Activated CD8-positive, alpha-beta T cell treated with anti-CD3 and anti-CD28 coated beads, Interleukin-2, amount 10 ng/mL, durations not matched to agents 7 days and 5 days (primary cell): ENCODE measurements at regions of chr10 and their contacts with region 1.

Region 1: DNA sequence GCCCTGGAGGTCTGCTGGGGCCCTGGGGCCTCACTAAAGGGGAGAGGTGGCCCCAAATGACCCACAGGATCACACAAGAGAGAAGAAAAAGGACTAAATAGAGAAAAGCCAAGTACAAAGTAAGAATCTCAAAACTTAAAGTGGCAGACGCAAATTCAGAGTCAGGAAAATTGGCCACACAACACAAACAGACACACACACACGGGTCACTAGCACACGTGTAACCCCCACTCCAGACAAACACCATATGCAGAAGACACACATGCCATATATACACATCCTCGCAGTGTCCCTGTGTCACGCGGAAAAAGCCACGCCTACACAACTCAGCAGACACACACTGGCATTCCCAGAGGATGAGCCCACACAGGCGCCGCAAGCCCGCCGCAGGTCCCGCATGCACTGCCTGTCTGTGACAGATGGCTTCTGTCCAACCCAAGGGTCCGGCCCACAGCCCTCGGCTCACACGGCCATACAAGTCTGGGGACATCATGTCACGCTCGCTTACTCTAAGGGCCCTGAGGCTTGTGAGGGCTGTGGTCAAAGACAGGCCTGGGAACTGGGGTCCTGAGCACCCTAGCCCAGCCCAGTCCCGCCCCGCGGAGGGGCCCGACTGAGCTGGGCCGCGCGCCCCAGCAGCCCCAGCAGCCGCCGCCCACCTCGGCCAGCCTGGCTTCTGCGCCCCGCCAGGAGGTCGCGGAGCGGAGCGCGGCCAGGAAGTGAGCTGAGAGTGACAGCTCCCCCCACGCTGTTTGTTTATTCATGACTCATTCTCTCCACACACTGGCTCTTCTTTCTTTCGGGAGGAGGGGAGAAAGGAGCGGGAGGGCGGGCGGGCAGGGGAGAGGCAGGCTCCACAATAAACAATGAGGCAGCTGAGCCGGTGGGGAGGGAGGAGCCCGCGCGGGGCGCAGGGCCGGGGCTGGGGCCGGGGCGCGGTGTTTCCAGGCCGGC is 95.5 kb upstream of the ZMIZ1 start:
- DNase-seq: peak; percentile 83
- ATAC-seq: peak; percentile 82
- H3K4me3 Mint-ChIP-seq: peak overlapping the region; percentile 66
- H3K27ac Mint-ChIP-seq: peak overlapping the region; percentile 58
- H3K4me1 Mint-ChIP-seq: peaks cover 24% of the 10 kb centered on the region
- H3K27me3 Mint-ChIP-seq: no peaks in the 10 kb centered on the region

Region 2: DNA sequence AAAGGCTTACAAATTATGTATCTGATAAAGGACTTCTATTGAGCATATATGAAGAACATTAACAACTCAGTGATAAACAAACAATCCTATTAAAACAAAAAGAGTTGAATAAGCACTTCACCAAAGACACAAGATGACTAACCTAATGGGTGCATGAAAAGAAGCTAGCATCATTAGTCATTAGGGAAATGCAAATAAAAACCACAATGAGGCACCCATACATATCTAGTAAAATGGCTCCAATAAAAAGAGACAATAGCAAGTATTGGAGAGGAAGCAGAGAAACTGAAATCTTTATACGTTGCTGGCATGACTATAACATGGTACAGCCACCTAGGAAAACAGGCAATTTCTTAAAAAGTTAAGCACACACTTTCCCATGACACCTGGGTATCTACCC is 18.0 kb after region 1 on chr10:
- CTCF ChIA-PET with region 1: interaction called, 20 read pairs
- POLR2A ChIA-PET with region 1: interaction called, 3 read pairs
- DNase-seq: no peak
- ATAC-seq: no peak
- H3K4me3 Mint-ChIP-seq: no peak overlapping the region
- H3K27ac Mint-ChIP-seq: no peak overlapping the region
- H3K4me1 Mint-ChIP-seq: peaks cover 21% of the 10 kb centered on the region
- H3K27me3 Mint-ChIP-seq: peaks cover 3% of the 10 kb centered on the region

Region 3: GRCh38 chr10:79067241-79068202 is 94.3 kb after region 1 on chr10:
- CTCF ChIA-PET with region 1: interaction called, 22 read pairs
- POLR2A ChIA-PET with region 1: interaction called, 3 read pairs
- DNase-seq: peak; percentile 84
- ATAC-seq: peak; percentile 24
- H3K4me3 Mint-ChIP-seq: peak overlapping the region; percentile 79
- H3K27ac Mint-ChIP-seq: peak overlapping the region; percentile 4
- H3K4me1 Mint-ChIP-seq: peaks cover 56% of the 10 kb centered on the region
- H3K27me3 Mint-ChIP-seq: peaks cover 14% of the 10 kb centered on the region

Region 4: DNA sequence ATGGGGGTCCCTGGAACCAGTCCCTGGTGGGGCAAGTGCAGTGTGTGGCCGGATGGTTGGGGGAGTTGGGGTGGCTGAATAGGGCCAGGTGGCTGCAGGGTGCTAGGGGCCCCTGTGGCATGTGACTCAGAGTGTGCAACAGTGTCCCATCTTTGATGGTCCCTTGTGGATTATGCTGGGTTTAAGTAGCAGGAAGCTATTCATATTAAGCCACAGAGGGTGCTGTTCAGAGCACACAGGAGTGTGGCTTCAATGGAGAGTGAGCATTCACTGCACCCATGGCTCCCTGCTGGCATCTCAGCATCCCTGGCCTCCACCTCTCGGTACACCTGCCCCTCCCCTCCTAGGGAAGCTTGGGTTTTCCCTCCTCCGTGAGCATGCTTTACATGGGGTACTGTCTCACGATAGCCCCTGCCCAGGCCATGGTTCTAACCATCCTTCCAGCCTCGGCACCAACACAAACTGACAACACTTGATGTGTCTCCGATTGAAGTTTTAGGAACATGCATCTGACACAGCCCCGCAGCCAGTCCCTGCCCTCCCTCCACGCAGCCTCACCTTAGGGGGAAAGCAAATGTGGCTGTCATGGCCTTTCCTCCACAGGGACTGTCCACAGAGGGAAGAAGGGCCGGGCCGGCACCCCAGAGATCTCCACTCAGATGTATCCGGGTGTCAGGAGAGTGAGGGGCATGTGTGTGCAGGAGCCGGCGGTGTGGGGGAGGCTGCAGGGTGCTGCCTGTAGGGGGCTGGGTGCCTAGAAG is 343.6 kb after region 1 on chr10:
- CTCF ChIA-PET with region 1: no interaction called
- POLR2A ChIA-PET with region 1: no interaction called
- DNase-seq: peak; percentile 51
- ATAC-seq: peak; percentile 50
- H3K4me3 Mint-ChIP-seq: peak overlapping the region; percentile 71
- H3K27ac Mint-ChIP-seq: peak overlapping the region; percentile 95
- H3K4me1 Mint-ChIP-seq: peaks cover 65% of the 10 kb centered on the region
- H3K27me3 Mint-ChIP-seq: no peaks in the 10 kb centered on the region